Mammary epithelial cell (primary cell): ENCODE measurements at regions of chr3 and their contacts with region 1.

Region 1: DNA sequence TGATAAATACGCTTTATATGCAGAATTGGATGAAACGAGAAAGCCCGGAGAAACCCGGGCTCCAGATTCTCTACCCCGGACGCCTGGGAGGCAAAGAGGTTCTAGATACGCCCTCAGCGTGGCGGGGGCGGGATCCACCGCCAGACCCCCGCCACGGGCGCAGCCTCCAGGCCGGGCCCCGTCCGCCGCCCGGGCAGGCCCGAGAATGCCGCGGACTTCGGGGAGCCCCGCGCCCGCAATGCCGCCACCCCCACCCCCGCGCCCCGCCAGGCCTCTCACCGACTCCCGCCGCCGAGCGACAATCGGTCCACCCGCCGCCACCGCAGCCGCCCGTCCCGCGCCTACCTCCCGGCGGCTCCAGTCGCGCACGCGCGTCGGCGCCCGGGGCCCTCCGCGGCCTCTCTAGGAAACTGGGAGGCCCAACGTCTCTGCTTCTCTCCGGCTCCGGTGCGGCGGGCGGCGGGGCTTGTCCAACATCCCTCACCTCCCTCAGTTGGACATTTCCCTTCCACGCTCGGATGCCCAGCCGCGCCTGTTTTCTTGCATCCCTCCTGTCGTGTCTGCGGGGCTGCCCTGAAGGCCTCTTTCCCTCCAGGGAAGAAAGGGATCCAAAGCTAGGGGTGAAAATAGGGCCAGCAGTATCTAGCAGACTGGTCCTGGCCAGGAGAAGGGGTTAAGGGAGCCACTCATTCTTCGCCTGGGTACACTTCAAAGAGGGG is at the start of gene ZNF445:
- DNase-seq: peak; percentile 71
- H3K4me3 ChIP-seq: peak within 1 kb of the TSS; percentile 57 to 90 (median 77)
- H3K27ac ChIP-seq: peak within 1 kb of the TSS; percentile 33
- H3K4me1 ChIP-seq: peaks cover 10% of the 10 kb centered on the region
- H3K27me3 ChIP-seq: no peaks in the 10 kb centered on the region
- CTCF ChIP-seq: no peak
- total RNA-seq, gene ZNF445: 7.5 to 14.2 TPM

Region 2: DNA sequence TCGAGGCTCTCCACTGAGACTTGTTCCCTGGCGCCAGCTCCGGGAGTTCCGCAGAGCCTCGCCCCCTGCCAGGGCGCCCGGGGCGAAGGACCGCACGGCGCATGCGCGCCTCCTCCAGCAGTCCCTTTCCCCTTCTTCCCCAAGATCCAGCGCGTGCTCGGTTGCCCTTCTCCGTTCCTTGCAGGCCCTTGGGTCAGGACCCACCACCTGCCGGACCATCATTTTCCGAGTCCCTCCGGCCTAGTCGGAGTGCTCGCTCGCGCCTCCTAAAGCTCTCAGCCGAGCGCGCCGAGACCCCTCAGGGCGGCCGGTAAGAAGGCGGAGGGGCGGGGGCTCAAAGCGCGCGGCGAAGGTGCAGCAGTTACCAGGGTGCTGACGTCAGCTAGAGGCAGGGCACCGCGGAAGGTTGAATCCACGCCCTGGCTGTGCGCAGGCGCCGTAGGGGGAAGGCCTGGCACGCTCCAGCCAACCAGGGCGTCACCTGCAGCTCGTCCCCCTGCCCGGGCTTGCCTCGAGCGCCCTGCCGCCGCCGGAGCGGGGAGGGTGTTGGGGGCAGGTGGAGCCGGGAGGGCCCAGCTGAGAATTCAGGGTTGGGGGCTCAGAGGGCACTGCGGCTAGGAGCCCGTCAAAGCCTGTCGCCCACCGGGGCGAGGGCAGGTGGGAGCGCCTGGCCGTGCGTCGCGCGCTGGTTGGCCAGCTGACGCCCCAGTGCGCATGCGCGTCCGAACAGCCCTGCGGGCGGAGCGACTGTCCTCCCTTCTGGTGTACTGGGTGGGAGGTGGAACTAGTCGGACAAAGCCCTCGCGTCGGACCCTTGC is 139.3 kb before region 1 on chr3 and contains the start of gene TCAIM:
- CTCF ChIA-PET with region 1: no interaction called
- dilution Hi-C with region 1: no loop called
- in situ Hi-C with region 1: no loop called
- intact Hi-C with region 1: loop called (anchors 5 kb)
- DNase-seq: peak; percentile 98
- H3K4me3 ChIP-seq: peak within 1 kb of the TSS; percentile 89 to 95 (median 95)
- H3K27ac ChIP-seq: peak within 1 kb of the TSS; percentile 83
- H3K4me1 ChIP-seq: peaks cover 13% of the 10 kb centered on the region
- H3K27me3 ChIP-seq: no peaks in the 10 kb centered on the region
- CTCF ChIP-seq: no peak
- total RNA-seq, gene TCAIM: 19.5 to 21.7 TPM

Region 3: DNA sequence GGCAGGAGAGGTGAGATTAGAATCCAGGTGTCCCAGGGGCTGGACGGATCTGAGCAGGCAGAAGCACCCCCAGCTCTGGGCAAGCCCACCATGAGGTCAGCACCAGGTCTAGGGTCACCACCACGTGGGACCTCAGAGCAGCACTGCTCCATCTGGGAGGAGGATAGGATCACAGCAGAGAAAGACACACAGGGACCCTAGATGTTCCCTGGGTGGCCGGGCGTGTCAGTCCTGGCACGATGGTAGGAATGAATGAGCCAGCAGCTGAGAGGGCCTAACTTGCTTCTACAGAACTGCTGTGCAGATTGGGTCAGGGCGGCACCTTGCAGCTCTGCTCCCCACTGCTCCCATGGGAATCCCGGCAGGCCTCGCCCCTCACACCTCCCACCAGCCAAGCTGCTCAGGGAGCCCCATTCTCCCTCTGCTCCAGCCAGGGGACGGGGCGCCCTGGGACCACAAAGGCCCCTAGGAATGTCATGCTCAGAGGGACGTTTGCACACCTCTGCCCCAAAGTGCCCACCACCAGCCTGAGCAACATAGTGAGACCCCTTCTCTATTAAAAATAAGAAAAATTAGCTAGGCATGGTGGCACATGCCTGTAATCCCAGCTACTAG is 66.3 kb before region 1 on chr3:
- CTCF ChIA-PET with region 1: no interaction called
- dilution Hi-C with region 1: no loop called
- in situ Hi-C with region 1: no loop called
- intact Hi-C with region 1: no loop called
- DNase-seq: no peak
- H3K4me3 ChIP-seq: no peak overlapping the region
- H3K27ac ChIP-seq: no peak overlapping the region
- H3K4me1 ChIP-seq: no peaks in the 10 kb centered on the region
- H3K27me3 ChIP-seq: no peaks in the 10 kb centered on the region
- CTCF ChIP-seq: no peak